MCF 10A (cell line): ENCODE measurements at regions of chrX and their contacts with region 1.

Region 1: GRCh38 chrX:141278302-141278701 is 36.0 kb upstream of the SPANXC start:
- DNase-seq: peak; percentile 66
- H3K4me3 Mint-ChIP-seq: no peak overlapping the region
- H3K27ac Mint-ChIP-seq: no peak overlapping the region
- H3K4me1 Mint-ChIP-seq: no peaks in the 10 kb centered on the region
- H3K27me3 Mint-ChIP-seq: no peaks in the 10 kb centered on the region
- CTCF ChIP-seq: peak; percentile 74

Region 2: DNA sequence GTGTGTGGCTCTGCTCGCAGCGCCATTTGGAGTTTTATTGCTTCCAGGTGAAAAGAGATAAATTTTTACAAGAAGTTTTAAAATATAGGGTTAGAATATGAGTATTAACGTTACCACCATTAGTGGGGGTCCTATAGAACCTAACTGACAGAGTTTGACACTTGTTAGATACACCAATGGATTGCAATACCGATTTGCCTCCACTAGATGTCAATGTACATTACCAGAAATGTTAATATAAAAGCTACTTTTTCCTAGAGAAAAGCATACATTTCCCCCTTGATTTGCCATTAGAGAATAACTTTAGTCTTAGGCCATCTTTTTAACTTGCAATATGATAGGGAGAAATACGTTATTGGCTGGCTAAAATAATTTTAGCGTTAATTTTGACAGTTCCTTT is 460.4 kb before region 1 on chrX:
- CTCF ChIA-PET with region 1: interaction called, 12 read pairs
- POLR2A ChIA-PET with region 1: interaction called, 3 read pairs
- intact Hi-C with region 1: loop called (anchors 5 kb)
- DNase-seq: peak; percentile 51
- H3K4me3 Mint-ChIP-seq: no peak overlapping the region
- H3K27ac Mint-ChIP-seq: no peak overlapping the region
- H3K4me1 Mint-ChIP-seq: peaks cover 16% of the 10 kb centered on the region
- H3K27me3 Mint-ChIP-seq: no peaks in the 10 kb centered on the region
- CTCF ChIP-seq: peak; percentile 58

Region 3: GRCh38 chrX:140918407-140919038 is 359.8 kb before region 1 on chrX:
- CTCF ChIA-PET with region 1: interaction called, 138 read pairs
- POLR2A ChIA-PET with region 1: interaction called, 4 read pairs
- intact Hi-C with region 1: loop called (anchors 1 kb)
- DNase-seq: peak; percentile 73
- H3K4me3 Mint-ChIP-seq: no peak overlapping the region
- H3K27ac Mint-ChIP-seq: peak overlapping the region; percentile 41
- H3K4me1 Mint-ChIP-seq: peaks cover 7% of the 10 kb centered on the region
- H3K27me3 Mint-ChIP-seq: no peaks in the 10 kb centered on the region
- CTCF ChIP-seq: peak; percentile 91

Region 4: DNA sequence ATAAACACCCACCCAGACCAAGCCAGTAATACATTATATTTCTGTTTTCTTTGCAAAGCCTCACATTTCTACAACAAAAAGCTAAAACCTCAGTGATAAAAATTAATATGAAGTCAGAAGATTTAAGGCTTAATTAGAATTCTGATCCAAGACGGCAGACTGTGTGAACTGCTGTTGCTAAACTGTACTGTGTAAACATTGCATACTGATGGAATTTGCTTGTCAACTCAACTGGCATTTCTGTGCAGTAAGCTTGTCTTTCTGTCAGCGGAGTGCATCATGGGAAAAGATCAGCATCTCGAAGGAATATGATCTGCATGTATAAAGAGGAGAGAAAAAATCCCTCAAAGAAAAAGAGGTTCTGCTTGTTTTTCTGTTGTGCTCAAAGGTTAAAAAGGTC is 345.3 kb before region 1 on chrX:
- CTCF ChIA-PET with region 1: interaction called, 15 read pairs
- POLR2A ChIA-PET with region 1: interaction called, 3 read pairs
- intact Hi-C with region 1: no loop called
- DNase-seq: no peak
- H3K4me3 Mint-ChIP-seq: no peak overlapping the region
- H3K27ac Mint-ChIP-seq: no peak overlapping the region
- H3K4me1 Mint-ChIP-seq: no peaks in the 10 kb centered on the region
- H3K27me3 Mint-ChIP-seq: no peaks in the 10 kb centered on the region
- CTCF ChIP-seq: no peak

Region 5: DNA sequence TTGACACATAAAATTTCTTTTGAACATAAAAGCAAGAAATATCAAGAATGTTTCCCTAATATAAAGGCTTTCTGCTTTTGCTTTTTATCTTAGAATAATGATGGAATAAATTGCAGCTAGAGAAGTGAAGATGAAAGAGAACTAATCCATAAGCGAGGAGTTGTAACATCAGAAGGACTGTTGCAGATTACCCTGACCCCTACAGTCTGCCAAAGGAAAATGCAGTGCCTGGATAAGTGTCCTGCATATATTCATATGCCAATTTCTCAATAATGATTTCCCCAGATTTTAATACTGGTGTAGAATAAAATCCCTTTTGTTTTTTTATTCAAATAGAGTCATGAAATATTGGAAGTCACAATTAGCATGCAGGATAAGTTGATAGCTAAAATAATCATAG is 810.9 kb after region 1 on chrX:
- CTCF ChIA-PET with region 1: interaction called, 6 read pairs
- POLR2A ChIA-PET with region 1: no interaction called
- intact Hi-C with region 1: loop called (anchors 5 kb)
- DNase-seq: peak; percentile 54
- H3K4me3 Mint-ChIP-seq: no peak overlapping the region
- H3K27ac Mint-ChIP-seq: no peak overlapping the region
- H3K4me1 Mint-ChIP-seq: no peaks in the 10 kb centered on the region
- H3K27me3 Mint-ChIP-seq: no peaks in the 10 kb centered on the region
- CTCF ChIP-seq: peak; percentile 72